GM18951 (cell line): ENCODE measurements at regions of chr17 and their contacts with region 1.

Region 1: GRCh38 chr17:48878918-48879898 is 13.4 kb upstream of the ATP5MC1 start:
- POLR2A ChIP-seq: no peak

Region 2: DNA sequence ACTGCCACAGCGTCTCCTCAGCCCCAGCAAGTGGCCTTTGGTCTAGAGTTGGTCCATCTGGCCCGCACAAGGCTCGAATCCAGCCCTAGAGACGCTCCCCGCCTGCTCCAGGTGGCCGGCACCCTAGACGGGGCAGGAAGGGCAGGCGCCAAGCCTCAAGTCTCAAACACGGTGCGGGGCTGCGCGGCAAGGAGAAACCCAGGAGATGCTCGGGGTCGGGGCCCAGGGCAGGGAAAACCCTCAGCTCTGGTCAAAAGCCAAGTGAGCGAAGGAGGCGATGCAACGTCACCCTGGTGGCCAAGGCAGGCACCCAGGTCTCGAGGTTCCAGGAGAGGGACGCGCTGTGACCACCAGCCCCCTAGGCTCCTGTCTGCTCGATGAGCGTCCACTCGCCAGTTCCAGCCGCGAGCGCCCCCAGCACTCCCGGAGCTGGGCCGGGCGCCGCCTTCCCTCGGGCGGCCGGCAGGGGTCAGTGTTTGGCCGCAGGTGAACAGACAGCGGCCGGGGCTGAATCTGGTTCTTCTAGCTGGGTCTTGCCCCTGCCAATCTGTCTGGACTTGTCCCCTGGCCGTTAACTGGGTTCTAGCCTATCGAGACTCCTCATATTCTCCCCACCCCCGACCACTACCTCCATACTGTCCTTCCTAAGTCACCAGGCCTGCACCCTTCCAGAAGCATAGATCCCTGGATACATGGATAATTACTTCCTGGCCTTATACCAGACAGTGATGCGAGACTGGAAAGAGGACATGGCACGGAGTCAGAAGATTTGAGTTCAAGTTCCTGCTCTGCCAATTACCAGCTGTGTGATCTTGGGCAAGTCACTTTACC is 200.9 kb before region 1 on chr17:
- in situ Hi-C with region 1: loop called (anchors 10 kb)
- POLR2A ChIP-seq: no peak

Region 3: GRCh38 chr17:48724251-48725003 is 154.8 kb before region 1 on chr17:
- in situ Hi-C with region 1: loop called (anchors 10 kb)
- POLR2A ChIP-seq: no peak

Region 4: GRCh38 chr17:48814504-48814903 is 64.7 kb before region 1 on chr17:
- in situ Hi-C with region 1: loop called (anchors 5 kb)
- POLR2A ChIP-seq: no peak

Region 5: GRCh38 chr17:49022391-49022941 is 143.3 kb after region 1 on chr17:
- in situ Hi-C with region 1: loop called (anchors 10 kb)
- POLR2A ChIP-seq: no peak